Activated T-helper 2 cell treated with anti-CD3 and anti-CD28 coated beads, Interferon-gamma antibody, Interleukin-2, Interleukin-4, amounts not matched to agents 10 μg/mL and 5 μg/mL and 100 μg/mL, durations not matched to agents 14 hours and 24 hours and 36 hours (primary cell): ENCODE measurements at regions of chr3 and their contacts with region 1.

Region 1: GRCh38 chr3:106333911-106334618 is 465.3 kb upstream of the CBLB start:
- DNase-seq: no peak
- H3K4me3 Mint-ChIP-seq: peak overlapping the region; percentile 63
- H3K27ac Mint-ChIP-seq: peak overlapping the region; percentile 91
- H3K4me1 Mint-ChIP-seq: peaks cover 76% of the 10 kb centered on the region
- H3K27me3 Mint-ChIP-seq: no peaks in the 10 kb centered on the region

Region 2: GRCh38 chr3:105366326-105367062 is 967.6 kb before region 1 on chr3 and contains the start of gene ALCAM:
- intact Hi-C with region 1: loop called (anchors 2 kb)
- DNase-seq: peak; percentile 77
- H3K4me3 Mint-ChIP-seq: peak within 1 kb of the TSS; percentile 94
- H3K27ac Mint-ChIP-seq: peak within 1 kb of the TSS; percentile 100
- H3K4me1 Mint-ChIP-seq: peaks cover 44% of the 10 kb centered on the region
- H3K27me3 Mint-ChIP-seq: peaks cover 22% of the 10 kb centered on the region
- total RNA-seq, gene ALCAM: 36.7 and 37.3 TPM in 2 replicates

Region 3: DNA sequence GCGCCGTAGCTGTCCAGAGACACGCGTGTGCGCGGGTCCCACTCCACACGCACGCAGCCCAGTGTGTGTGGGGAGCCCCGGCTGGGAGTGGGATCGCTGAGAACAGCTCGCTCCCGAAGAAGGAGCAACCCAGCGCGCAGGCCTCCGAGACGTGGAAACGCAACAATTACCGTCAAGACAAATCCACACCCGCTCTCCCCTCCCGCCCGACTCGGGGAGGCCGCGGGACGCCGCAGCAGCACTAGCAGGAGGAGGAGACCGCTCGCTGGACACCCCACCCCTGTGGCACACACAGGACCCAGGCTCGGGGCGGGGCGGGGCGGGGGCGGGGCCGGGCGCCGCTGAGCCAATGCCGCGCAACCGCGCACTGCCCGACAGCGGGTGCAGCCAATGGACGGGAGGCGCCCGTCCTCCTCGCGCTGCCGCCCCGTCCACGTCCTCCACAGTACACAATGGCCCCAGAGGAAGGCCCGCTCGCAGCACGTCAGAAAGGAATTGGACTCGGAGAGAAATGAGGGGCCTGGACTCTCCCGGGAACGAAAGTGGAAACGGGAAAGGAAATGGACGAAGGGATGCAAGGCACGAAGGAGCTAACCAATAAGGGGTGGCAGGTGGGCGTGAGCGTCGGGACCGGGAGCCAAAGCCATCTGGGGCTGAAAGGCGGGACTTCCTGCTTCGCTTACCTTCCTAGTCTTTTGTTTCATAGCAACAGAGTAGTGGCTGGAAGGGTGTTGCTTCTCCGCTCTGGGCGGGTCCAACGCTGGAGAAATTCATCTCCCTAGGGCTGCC is 465.1 kb before region 1 on chr3 and contains the start of gene CBLB:
- intact Hi-C with region 1: loop called (anchors 2 kb)
- DNase-seq: peak; percentile 82
- H3K4me3 Mint-ChIP-seq: peak within 1 kb of the TSS; percentile 89
- H3K27ac Mint-ChIP-seq: peak within 1 kb of the TSS; percentile 93
- H3K4me1 Mint-ChIP-seq: peaks cover 26% of the 10 kb centered on the region
- H3K27me3 Mint-ChIP-seq: no peaks in the 10 kb centered on the region
- total RNA-seq, gene CBLB: 146 and 152 TPM in 2 replicates

Region 4: DNA sequence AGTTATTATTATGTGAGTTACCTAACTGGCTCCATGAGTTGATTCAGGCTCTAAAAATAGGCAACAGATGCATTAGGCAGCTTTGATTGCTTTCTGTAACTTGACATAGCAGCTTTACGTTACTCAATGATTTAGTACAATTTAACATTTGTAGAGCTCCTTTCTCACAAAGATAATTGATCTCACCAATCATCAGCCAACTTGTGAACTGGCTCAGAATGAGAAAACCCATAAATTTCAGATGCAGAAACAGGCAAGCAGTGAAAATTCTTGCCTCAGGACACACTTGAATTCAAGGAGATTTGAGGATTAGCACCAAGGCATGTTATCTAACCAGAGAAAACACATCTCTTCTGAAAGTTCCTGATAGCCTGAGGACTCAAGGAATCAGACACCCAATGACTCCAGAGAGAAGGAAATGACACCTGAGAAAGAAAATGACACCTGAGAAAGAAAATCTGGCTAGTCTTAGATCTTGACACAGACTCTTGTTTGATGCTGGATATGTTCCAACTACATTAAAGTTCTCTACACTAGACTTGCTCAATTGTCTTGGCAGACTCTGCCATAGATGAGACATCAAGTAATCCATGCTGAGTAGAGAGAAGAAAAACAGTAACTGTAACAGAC is 150.2 kb before region 1 on chr3:
- intact Hi-C with region 1: loop called (anchors 1 kb)
- DNase-seq: no peak
- H3K4me3 Mint-ChIP-seq: no peak overlapping the region
- H3K27ac Mint-ChIP-seq: peak overlapping the region; percentile 35
- H3K4me1 Mint-ChIP-seq: peaks cover 51% of the 10 kb centered on the region
- H3K27me3 Mint-ChIP-seq: no peaks in the 10 kb centered on the region

Region 5: DNA sequence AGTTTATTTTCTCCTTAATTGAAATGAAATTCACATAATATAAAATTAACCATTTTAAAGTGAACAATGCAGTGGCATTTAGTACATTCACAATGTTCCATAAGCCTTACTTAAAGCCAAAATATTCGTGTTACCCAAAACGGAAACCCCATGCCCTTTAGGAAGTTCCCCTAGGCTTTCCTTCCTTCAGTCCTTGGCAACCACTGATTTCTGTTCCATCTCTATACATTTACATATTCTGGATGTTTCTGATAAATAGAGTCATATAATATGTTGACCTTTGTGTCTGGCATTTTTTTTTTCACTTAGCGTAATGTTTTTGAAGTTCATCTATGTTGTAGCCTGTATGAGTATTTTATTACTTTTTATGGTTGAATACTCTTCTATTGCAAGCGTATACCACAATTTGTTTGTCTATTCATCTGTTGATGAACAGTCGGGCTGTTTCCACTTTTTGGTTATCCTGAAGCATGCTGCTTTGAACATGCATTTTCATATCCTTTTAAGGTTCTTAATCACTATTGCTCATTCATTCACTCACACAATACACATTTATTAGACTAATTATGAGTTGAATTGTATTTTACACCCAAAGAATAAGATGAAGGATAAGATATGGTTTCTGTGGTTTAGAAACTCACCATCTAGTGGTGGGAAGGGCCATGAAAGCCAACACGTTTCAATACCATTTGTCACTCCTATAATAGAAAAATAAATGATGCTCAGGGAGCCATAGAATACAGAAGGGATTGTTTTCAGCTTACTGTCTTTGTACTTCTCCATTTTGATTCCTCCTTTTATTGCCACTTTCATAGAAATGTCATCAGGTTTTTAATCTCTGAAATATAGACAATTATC is 57.1 kb before region 1 on chr3:
- intact Hi-C with region 1: loop called (anchors 1 kb)
- DNase-seq: no peak
- H3K4me3 Mint-ChIP-seq: no peak overlapping the region
- H3K27ac Mint-ChIP-seq: no peak overlapping the region
- H3K4me1 Mint-ChIP-seq: peaks cover 27% of the 10 kb centered on the region
- H3K27me3 Mint-ChIP-seq: no peaks in the 10 kb centered on the region

Region 6: GRCh38 chr3:106413683-106414082 is 79.6 kb after region 1 on chr3:
- intact Hi-C with region 1: no loop called
- DNase-seq: no peak
- H3K4me3 Mint-ChIP-seq: no peak overlapping the region
- H3K27ac Mint-ChIP-seq: no peak overlapping the region
- H3K4me1 Mint-ChIP-seq: peaks cover 4% of the 10 kb centered on the region
- H3K27me3 Mint-ChIP-seq: no peaks in the 10 kb centered on the region

Region 7: DNA sequence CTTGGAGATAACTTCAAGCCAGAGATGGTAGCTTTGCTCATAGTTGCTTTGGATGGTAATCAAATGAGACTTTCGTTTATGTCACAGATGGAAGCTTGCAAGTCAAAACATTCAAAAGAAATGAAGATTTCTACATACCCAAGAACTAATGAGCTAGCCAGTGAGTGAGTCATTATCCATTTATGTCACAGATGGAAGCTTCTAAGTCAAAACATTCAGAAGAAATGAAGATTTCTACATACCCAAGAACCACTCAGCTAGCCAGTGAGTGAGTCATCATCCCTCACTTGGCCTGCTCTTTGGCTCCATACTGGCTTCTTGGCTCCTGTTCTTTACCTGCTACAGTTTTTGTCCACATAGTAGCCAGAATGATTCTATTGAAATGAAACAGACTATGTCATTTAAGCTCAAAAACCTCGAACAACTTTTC is 94.5 kb after region 1 on chr3:
- intact Hi-C with region 1: loop called (anchors 1 kb)
- DNase-seq: no peak
- H3K4me3 Mint-ChIP-seq: no peak overlapping the region
- H3K27ac Mint-ChIP-seq: peak overlapping the region; percentile 93
- H3K4me1 Mint-ChIP-seq: peaks cover 44% of the 10 kb centered on the region
- H3K27me3 Mint-ChIP-seq: no peaks in the 10 kb centered on the region

Region 8: GRCh38 chr3:106609666-106610301 is 275.7 kb after region 1 on chr3:
- intact Hi-C with region 1: loop called (anchors 1 kb)
- DNase-seq: peak; percentile 41
- H3K4me3 Mint-ChIP-seq: no peak overlapping the region
- H3K27ac Mint-ChIP-seq: peak overlapping the region; percentile 73
- H3K4me1 Mint-ChIP-seq: peaks cover 26% of the 10 kb centered on the region
- H3K27me3 Mint-ChIP-seq: no peaks in the 10 kb centered on the region